PC-3 (cell line): ENCODE measurements at regions of chr3 and their contacts with region 1.

Region 1: DNA sequence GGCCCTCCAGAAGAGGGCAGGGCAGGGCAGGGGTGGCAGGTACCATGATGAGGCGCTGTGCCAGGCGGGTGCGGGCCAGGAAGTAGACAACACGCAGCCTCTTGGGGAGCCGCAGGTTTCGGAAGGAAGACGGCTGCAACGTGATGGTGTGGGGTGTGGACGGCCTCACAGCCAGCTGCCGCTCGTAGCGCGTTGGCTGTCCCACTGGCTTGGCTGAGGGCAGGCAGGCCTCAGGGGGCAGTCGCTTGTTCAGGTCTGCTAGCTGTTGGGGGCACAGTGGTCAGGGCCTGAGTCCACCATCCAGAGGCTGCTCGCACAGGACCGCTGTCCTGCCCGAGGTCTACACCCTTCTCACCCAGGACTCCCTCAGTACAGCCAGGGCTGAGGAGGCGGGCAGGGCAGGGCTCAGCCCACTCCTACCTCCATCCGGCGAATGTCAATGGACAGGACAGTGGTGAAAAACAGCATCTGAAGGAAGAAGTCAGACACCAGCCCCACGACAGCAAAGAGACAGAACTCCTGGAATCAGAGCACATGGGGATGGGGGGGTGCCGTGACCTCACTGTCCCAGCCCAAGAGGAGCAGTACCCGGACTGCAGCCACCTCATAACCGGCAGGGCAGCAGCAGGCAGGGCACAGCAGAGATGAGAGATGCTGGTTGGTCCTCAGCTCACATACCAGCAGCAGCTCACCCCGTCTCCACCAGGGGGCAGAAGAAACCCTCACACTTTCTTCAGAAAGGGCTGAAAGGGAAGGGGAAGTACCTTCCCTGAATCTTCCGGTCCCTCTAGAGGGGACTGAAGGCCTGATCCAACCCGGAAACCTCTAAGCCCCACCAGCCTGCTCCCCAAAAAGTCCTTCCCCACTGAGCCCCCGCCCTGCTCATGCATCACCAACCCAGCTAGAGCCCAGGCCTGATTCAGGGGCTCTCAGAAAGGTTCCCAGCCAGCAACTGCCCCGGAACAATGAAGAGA is 40.0 kb downstream of the PTPN23 start:
- DNase-seq: peak; percentile 96
- ATAC-seq: peak; percentile 84
- H3K4me3 ChIP-seq: no peak overlapping the region
- H3K27ac ChIP-seq: no peak overlapping the region
- H3K4me1 ChIP-seq: no peaks in the 10 kb centered on the region
- H3K27me3 ChIP-seq: no peaks in the 10 kb centered on the region
- CTCF ChIP-seq: peak; percentile 93

Region 2: DNA sequence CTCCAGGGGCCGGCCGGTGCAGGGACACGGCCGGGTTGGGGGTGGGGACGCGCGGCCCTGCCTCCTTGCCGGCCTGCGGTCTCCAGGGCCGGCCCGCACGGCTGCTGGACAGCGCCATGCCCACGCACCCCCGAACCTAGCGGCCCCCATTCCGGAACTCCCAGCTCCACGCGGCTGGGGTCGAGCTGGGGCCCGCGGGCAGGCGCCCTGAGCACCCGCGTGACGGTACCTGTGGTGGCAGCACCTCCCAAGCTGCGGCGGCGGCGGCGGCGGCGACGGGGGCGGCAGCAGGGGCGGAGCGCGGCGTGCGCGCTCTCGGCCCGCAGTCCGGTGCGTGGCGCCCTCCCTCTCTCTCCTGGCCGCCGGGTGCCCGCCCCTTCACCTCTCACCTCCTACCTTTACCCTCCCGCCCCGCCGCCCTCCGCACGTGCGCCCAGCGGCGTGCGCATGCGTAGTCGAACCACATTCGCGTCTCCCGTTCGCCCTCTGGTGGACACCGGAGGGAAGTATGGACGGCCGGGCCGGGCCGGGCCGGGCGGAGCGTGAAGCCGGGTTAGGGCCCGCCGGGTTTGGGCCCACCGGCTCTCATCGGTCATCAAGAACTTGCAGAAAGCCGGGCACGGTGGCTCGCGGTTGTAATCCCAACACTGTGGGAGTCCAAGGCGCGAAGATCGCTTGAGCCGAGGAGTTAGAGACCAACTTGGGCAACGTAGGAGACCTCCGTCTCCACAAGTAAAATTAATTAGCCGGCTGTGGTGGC is 55.0 kb after region 1 on chr3 and contains the start of gene SCAP:
- CTCF ChIA-PET with region 1: interaction called, 4 read pairs
- POLR2A ChIA-PET with region 1: no interaction called
- intact Hi-C with region 1: loop called (anchors 1 kb)
- DNase-seq: peak; percentile 91
- ATAC-seq: peak; percentile 83
- H3K4me3 ChIP-seq: peak within 1 kb of the TSS; percentile 88
- H3K27ac ChIP-seq: peak within 1 kb of the TSS; percentile 46
- H3K4me1 ChIP-seq: peaks cover 8% of the 10 kb centered on the region
- H3K27me3 ChIP-seq: no peaks in the 10 kb centered on the region
- CTCF ChIP-seq: peak; percentile 82
- total RNA-seq, gene SCAP: 84.7 and 95.6 TPM in 2 replicates

Region 3: GRCh38 chr3:47513125-47513929 is 92.5 kb after region 1 on chr3 and contains the start of gene ELP6:
- CTCF ChIA-PET with region 1: no interaction called
- POLR2A ChIA-PET with region 1: no interaction called
- intact Hi-C with region 1: loop called (anchors 1 kb)
- DNase-seq: peak; percentile 96
- ATAC-seq: peak; percentile 98
- H3K4me3 ChIP-seq: peak within 1 kb of the TSS; percentile 80
- H3K27ac ChIP-seq: peak within 1 kb of the TSS; percentile 88
- H3K4me1 ChIP-seq: peaks cover 11% of the 10 kb centered on the region
- H3K27me3 ChIP-seq: no peaks in the 10 kb centered on the region
- CTCF ChIP-seq: peak; percentile 58
- total RNA-seq, gene ELP6: 64.5 and 97.9 TPM in 2 replicates

Region 4: DNA sequence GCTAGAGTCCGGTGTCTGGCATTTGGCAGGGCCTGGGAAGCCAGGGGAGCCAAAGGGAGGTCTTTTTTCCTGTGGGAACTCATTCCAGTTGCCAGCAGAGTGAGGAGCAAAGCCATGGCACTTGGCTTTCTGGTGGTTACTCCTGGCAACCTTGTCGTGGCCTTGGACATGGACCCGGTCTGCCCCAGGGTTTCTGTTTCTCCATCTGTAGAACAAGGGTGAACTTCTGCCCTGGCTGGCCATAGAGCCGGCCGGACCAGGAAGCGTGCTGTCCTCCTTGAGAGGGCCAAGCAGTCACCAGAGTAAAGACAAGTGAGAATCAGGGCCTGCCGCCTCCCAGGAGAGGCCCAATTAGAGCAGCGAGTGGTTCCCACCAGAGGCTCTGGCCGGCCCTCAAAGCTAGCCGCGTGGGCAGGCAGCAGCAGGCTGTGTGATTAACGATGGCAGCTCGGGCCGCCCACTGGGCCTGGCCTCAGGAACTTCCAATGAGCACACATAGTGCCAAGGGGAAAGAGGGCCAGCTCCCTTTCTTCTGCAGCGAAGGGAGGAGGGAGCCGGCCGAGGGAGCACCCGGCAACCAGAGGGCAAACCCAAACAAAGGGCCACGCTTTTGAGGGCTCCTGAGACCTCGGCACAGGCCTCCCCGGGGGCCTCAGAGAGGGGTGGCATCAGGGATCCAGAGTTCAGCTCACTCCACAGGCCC is 121.8 kb after region 1 on chr3:
- CTCF ChIA-PET with region 1: no interaction called
- POLR2A ChIA-PET with region 1: no interaction called
- intact Hi-C with region 1: no loop called
- DNase-seq: no peak
- ATAC-seq: no peak
- H3K4me3 ChIP-seq: no peak overlapping the region
- H3K27ac ChIP-seq: no peak overlapping the region
- H3K4me1 ChIP-seq: no peaks in the 10 kb centered on the region
- H3K27me3 ChIP-seq: no peaks in the 10 kb centered on the region
- CTCF ChIP-seq: no peak

Region 5: GRCh38 chr3:47791193-47791855 is 370.5 kb after region 1 on chr3:
- CTCF ChIA-PET with region 1: interaction called, 3 read pairs
- POLR2A ChIA-PET with region 1: no interaction called
- intact Hi-C with region 1: loop called (anchors 1 kb)
- DNase-seq: no peak
- ATAC-seq: no peak
- H3K4me3 ChIP-seq: no peak overlapping the region
- H3K27ac ChIP-seq: no peak overlapping the region
- H3K4me1 ChIP-seq: no peaks in the 10 kb centered on the region
- H3K27me3 ChIP-seq: no peaks in the 10 kb centered on the region
- CTCF ChIP-seq: no peak